Activated CD4-positive, alpha-beta memory T cell treated with anti-CD3 and anti-CD28 coated beads for 36 hours (primary cell): ENCODE measurements at regions of chr2 and their contacts with region 1.

Region 1: DNA sequence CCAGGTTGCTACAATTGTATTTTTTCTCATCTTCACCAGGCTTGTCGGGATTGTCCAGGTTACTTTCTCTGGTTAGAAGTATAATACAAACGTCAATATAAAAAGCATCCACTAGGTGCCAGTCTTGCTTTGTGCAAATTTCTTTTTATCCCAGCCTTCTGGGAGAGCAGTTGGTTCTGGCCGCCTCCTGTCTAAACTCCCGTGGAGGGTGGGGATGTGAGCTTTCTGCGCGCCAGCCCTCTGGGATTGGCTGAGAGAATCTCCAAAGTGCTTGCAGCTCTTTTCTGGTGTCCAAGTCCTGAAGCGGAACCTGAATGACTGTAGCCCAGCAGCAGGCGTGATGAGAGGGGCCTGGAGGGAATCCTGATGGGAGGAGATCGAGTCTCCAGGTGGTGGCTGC is 22.4 kb upstream of the TOGARAM2 start:
- DNase-seq: peak; percentile 40
- H3K4me3 Mint-ChIP-seq: no peak overlapping the region
- H3K27ac Mint-ChIP-seq: no peak overlapping the region
- H3K4me1 Mint-ChIP-seq: peaks cover 3% of the 10 kb centered on the region
- H3K27me3 Mint-ChIP-seq: no peaks in the 10 kb centered on the region

Region 2: DNA sequence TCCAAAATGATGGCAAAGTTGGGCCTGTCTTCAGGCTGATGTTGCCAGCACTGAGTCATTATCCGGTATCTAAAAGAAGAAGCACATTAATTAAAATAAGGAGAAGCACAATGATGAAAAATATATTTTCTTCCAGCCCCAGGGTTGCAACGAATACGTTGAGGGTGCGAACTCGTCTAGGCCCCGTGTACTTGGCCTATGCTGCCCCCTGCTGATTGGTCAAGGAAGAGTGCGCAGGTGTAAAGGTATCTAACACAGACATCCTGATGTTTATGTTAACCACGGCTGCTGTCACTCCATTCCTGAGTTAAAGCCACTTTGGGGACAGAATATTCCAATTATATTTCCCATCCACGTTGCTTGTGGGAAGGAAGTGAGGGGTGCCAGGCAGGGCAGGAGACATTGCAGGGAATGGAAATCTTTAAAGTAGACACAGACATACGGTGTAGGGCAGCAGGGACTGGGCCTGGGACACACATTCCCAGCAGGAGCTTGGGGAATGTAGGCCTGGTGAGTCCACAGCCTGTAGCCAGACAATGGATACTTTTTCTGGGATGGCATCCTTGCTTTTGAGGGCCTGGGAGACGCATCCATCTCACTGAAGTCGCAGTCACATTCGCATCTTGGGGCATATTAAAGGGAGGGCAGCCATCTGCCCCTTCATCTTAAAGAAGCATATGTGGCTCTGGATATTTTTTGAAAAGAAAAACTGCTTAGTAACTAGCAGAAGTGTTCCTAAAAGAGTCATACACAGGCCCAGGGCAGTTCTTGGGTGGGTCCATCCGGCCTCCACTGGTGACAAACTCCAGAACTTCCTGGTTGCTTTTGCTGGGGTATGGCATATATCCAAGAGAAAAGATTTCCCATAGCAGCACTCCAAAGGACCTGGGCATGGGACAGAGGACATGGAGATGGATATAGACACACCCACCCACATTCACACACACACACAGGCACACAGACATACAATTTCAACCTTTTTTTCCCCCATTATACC is 238.4 kb after region 1 on chr2:
- CTCF ChIA-PET with region 1: interaction called, 12 read pairs
- POLR2A ChIA-PET with region 1: no interaction called
- intact Hi-C with region 1: loop called (anchors 1 kb)
- DNase-seq: peak; percentile 85
- H3K4me3 Mint-ChIP-seq: no peak overlapping the region
- H3K27ac Mint-ChIP-seq: no peak overlapping the region
- H3K4me1 Mint-ChIP-seq: no peaks in the 10 kb centered on the region
- H3K27me3 Mint-ChIP-seq: no peaks in the 10 kb centered on the region

Region 3: DNA sequence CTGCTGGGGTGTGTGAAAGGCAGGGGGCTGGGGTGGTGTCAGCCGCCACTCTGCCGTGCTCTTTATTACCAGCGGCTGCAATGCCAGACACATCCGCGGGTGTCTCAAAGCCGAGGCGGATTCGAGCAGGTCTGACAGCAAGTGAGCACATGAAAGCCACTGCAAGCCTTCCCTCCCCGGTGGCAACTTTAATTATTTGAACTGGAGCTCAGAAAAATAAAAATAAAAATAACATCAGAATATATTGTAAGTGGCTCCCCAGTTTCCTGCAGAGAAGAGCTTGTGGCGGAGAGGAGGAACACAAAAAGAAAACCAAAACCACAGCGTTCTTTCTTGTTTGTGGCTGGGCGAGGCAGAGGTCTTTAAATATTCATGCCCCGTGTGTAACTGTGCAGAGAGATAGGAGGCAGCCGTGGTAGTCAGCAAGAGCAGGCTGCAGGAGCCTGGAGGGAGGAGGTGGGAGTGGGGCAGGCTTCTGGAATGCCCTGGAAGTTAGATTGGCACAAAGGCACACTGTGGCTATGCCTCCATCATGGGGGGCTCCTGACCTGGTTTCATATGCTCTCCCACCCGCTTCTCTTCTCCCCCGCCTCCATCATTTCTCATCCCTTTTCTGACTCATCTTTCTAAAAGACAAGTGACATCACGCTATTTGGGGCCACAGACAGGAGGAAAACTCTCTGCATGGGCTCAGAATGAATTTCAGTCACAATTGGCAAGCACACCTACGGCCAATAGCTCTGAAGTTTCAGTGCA is 356.3 kb after region 1 on chr2:
- CTCF ChIA-PET with region 1: no interaction called
- POLR2A ChIA-PET with region 1: no interaction called
- intact Hi-C with region 1: loop called (anchors 5 kb)
- DNase-seq: peak; percentile 71
- H3K4me3 Mint-ChIP-seq: peak overlapping the region; percentile 56
- H3K27ac Mint-ChIP-seq: peak overlapping the region; percentile 64
- H3K4me1 Mint-ChIP-seq: peaks cover 26% of the 10 kb centered on the region
- H3K27me3 Mint-ChIP-seq: peaks cover 28% of the 10 kb centered on the region

Region 4: DNA sequence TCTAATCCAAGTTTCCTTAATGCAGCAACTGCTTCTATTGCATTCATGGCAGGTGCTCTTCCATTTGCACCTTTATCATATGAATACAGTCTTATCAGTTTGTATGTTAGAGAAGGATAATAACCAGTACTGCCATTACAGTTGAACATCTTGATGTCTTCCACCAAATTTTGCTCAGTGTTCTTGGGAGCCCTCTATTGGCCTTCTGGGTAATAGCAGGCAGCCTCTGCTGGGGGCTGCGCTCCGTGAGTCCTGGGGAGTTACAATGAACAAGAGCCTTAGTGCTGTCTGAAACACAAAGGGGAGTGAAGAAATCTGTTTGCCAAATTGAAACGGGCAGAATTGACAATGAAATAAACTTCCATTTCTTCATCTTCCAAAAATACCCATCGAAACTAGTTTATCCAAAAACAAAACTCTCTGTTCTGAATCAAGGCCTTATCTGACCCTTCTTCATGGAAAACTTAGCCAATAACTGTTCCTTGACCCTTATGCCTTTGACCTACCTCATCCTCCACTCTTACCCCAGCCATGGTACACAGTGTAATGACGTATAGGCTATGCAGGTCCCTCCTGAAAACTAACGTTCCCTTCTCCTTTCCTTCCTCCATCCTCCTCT is 882.8 kb after region 1 on chr2:
- CTCF ChIA-PET with region 1: no interaction called
- POLR2A ChIA-PET with region 1: no interaction called
- intact Hi-C with region 1: loop called (anchors 5 kb)
- DNase-seq: peak; percentile 25
- H3K4me3 Mint-ChIP-seq: no peak overlapping the region
- H3K27ac Mint-ChIP-seq: no peak overlapping the region
- H3K4me1 Mint-ChIP-seq: no peaks in the 10 kb centered on the region
- H3K27me3 Mint-ChIP-seq: peaks cover 6% of the 10 kb centered on the region